ENCODE measurements at regions of chr6 and their contacts with region 1.

Region 1: DNA sequence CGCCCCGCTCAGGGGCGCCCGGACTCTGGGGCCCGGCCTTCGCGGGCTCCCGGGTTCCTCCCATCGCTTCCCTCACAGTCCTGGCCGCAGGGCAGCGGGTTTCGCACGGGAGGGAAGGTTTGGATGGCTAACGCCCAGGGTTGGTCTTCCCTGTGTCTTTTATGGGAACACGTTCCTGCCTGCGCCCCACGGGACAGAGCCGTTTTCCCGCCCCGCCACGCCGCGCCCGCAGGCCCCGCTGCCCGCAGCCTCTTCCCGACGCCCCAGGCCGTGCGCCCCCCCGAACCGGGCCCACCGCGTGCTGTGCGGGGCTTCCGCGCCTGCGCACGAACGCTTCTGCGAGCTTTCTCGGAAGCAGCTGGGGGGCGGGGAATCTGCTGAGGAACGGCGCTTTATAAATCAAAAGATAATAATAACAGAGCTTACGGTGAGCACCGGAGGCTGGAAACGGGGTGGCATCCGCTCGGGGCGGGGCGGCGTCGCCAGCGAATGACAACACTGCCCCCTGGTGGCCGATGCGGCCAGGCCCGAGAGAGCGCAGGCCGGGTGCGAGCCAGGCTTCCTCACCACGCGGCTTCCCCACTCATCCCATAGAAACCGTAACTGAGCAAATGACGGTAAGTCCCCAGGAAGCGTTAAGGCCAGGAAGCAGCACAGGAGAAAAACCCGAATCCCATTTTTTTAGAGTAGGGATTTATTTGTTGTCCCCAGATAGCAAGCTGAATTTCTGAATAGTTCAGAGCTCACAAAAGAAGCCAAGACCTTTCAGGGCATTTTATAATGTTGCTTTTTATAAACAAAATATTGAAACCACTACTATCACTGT is 116.4 kb downstream of the MYLK4 start:
- DNase-seq: peak; percentile 56 to 86 (median 76)
- H3K4me3 ChIP-seq: peak overlapping the region; percentile 33 to 74 (median 62)
- H3K27ac ChIP-seq: peak overlapping the region in 54 of 59 donors; percentile 12 to 89 (median 70)
- H3K27me3 ChIP-seq: peaks cover 0 to 12% (median 0%) of the 10 kb centered on the region in 45 donors
- CTCF ChIP-seq: peak; percentile 95 to 100 (median 99)

Region 2: GRCh38 chr6:2353412-2354137 is 280.8 kb before region 1 on chr6:
- intact Hi-C with region 1: loop called in 1 of 2 experiments (anchors 5 kb)
- DNase-seq: peak in 7 of 10 donors; percentile 45 to 75 (median 49)
- H3K4me3 ChIP-seq: peak overlapping the region in 1 of 59 donors; percentile 11
- H3K27ac ChIP-seq: peak overlapping the region in 2 of 59 donors; percentile 21 to 26
- H3K27me3 ChIP-seq: peaks cover 0 to 3% (median 0%) of the 10 kb centered on the region in 45 donors
- CTCF ChIP-seq: peak; percentile 52 to 93 (median 79)

Region 3: DNA sequence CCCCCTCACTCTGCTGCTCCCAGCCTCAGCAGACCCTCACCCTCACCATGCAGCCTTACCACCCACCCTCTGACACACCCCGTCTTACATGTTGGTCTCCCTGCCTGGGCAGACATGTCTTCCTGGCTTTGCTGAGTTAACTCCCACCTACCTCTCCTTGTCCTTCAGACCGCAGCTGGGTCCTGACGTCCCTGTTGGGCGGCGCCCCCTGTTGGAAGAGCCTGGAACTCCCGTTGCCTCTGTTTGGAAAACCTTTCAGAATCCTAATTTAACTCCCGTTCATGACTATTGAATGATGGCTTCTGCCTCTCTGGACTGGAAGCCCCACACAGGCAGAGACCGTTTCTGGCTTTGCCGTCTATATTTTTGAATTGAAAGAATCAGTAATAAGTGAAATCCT is 128.7 kb before region 1 on chr6:
- intact Hi-C with region 1: no loop called
- DNase-seq: no peak
- H3K4me3 ChIP-seq: no peak overlapping the region
- H3K27ac ChIP-seq: no peak overlapping the region
- H3K27me3 ChIP-seq: peaks cover 0 to 73% (median 22%) of the 10 kb centered on the region in 45 donors
- CTCF ChIP-seq: peak in 1 of 56 donors; percentile 28

Region 4: GRCh38 chr6:2770171-2770570 is 135.8 kb after region 1 on chr6:
- intact Hi-C with region 1: no loop called
- DNase-seq: no peak
- H3K4me3 ChIP-seq: peak overlapping the region in 44 of 59 donors; percentile 3 to 97 (median 58)
- H3K27ac ChIP-seq: peak overlapping the region in 26 of 59 donors; percentile 1 to 66 (median 26)
- H3K27me3 ChIP-seq: no peaks in the 10 kb centered on the region
- CTCF ChIP-seq: no peak

Measured in dorsolateral prefrontal cortex (tissue), 120 donors.